ENCODE measurements at regions of chr22 and their contacts with region 1.

Region 1: GRCh38 chr22:30005213-30005857 is 74.9 kb upstream of the HORMAD2 start:
- DNase-seq: peak; percentile 23 to 90
- H3K4me3 ChIP-seq: no peak overlapping the region
- H3K27ac ChIP-seq: no peak overlapping the region
- H3K4me1 ChIP-seq: peaks cover 0 to 2% (median 0%) of the 10 kb centered on the region in 4 experiments; a peak in 3 of 7 replicates
- H3K27me3 ChIP-seq: no peaks in the 10 kb centered on the region
- CTCF ChIP-seq: peak; percentile 77 to 97 (median 84)
- EP300 ChIP-seq: no peak
- POLR2A ChIP-seq: no peak
- RAD21 ChIP-seq: peak; percentile 95

Region 2: DNA sequence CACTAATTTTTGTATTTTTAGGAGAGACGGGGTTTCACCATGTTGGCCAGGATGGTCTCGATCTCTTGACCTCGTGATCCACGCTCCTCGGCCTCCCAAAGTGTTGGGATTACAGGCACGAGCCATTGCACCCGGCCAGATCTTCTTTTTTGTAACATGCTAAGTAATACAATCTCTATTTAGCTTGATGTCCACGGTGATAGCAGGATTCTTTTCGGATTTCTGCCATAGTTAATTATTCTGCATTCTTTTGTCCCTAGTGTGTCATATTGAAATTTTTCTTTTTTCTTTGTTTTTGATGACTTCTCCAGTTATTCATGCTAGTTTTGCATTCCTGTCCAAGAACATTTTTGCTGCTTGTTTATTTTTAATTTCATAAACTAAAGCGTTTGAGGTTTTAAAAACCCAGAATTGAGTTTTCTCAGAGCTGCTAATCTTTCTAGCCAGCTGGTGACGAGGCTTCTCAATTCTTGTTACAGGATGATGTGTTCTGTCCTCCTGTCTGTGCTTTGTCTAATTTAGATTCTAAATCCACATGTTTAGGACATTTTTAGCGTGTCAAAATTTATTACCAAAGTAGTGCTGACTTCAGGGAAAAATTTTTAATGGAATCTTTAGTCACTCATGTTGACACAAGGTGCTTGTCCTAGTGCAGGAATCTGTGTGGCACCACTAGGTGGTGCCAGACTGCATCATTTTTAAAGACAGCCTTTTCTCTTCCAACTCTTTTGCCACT is 380.1 kb before region 1 on chr22:
- CTCF ChIA-PET with region 1: interaction called, 11 read pairs
- POLR2A ChIA-PET with region 1: no interaction called
- DNase-seq: no peak
- H3K4me3 ChIP-seq: no peak overlapping the region
- H3K27ac ChIP-seq: no peak overlapping the region
- H3K4me1 ChIP-seq: peaks cover 0 to 6% (median 3%) of the 10 kb centered on the region in 4 experiments; a peak in 3 of 7 replicates
- H3K27me3 ChIP-seq: no peaks in the 10 kb centered on the region
- CTCF ChIP-seq: peak in 2 of 3 experiments; percentile 79 to 81; a peak in 3 of 4 replicates
- EP300 ChIP-seq: no peak
- POLR2A ChIP-seq: no peak
- RAD21 ChIP-seq: peak; percentile 41 to 64

Region 3: GRCh38 chr22:29716814-29717545 is 288.4 kb before region 1 on chr22:
- CTCF ChIA-PET with region 1: interaction called, 13 read pairs
- POLR2A ChIA-PET with region 1: no interaction called
- DNase-seq: peak in 1 of 2 experiments; percentile 86
- H3K4me3 ChIP-seq: no peak overlapping the region
- H3K27ac ChIP-seq: no peak overlapping the region
- H3K4me1 ChIP-seq: peaks cover 0 to 14% (median 4%) of the 10 kb centered on the region in 4 experiments; a peak in 6 of 7 replicates
- H3K27me3 ChIP-seq: peaks cover 21 to 36% (median 32%) of the 10 kb centered on the region in 4 experiments
- CTCF ChIP-seq: no peak
- EP300 ChIP-seq: no peak
- POLR2A ChIP-seq: no peak
- RAD21 ChIP-seq: peak; percentile 6 to 37; a peak in 1 of 4 replicates

Region 4: DNA sequence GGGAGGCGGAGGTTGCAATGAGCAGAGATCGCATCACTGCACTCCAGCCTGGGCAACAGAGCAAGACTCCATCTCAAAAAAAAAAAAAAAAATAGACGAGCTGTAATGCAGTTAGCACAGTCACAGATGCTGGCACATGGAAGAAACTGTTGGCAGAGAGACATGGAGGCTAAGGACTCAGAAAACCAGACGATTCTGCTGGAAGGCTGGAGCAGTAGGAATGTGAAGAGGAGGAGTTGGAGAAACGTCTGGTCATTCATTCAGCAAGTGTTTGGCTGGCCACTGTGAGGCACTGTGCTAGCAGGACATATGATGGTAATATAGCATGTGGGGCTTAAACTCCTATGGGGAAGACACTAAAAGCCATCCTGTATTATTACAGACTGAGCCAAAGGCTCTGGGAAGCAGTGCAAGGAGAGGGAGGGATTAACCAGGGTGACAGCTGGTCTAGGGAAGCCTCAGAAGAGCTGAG is 233.1 kb before region 1 on chr22:
- CTCF ChIA-PET with region 1: interaction called, 11 read pairs
- POLR2A ChIA-PET with region 1: no interaction called
- DNase-seq: no peak
- H3K4me3 ChIP-seq: no peak overlapping the region
- H3K27ac ChIP-seq: no peak overlapping the region
- H3K4me1 ChIP-seq: peaks cover 0 to 5% (median 3%) of the 10 kb centered on the region in 4 experiments; a peak in 5 of 7 replicates
- H3K27me3 ChIP-seq: no peaks in the 10 kb centered on the region
- CTCF ChIP-seq: peak; percentile 36 to 71 (median 37); a peak in 3 of 4 replicates
- EP300 ChIP-seq: no peak
- POLR2A ChIP-seq: no peak
- RAD21 ChIP-seq: peak; percentile 54 to 57

Region 5: GRCh38 chr22:29816128-29816527 is 189.2 kb before region 1 on chr22:
- CTCF ChIA-PET with region 1: interaction called, 14 read pairs
- POLR2A ChIA-PET with region 1: interaction called, 3 read pairs
- DNase-seq: no peak
- H3K4me3 ChIP-seq: no peak overlapping the region
- H3K27ac ChIP-seq: no peak overlapping the region
- H3K4me1 ChIP-seq: no peaks in the 10 kb centered on the region
- H3K27me3 ChIP-seq: no peaks in the 10 kb centered on the region
- CTCF ChIP-seq: no peak
- EP300 ChIP-seq: no peak
- POLR2A ChIP-seq: no peak
- RAD21 ChIP-seq: no peak

Region 6: DNA sequence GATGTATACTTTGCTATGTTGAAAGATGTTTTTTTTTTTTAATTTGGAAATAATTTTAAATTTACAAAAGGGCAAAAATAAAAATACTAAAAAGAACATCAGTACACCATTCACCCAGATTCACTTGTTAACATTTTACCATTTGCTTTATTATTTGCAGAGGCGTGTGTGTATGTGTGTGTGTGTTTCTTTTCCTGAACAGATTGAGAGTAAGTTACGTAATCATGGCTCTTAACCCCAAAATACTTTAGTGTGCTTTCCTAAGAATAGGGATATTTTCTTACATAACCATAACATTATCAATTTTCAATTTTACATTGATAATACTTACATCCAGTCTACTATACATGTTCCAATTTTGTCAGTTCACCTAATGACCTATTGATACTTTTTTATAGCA is 16.6 kb before region 1 on chr22:
- CTCF ChIA-PET with region 1: interaction called, 11 read pairs
- POLR2A ChIA-PET with region 1: interaction called, 3 read pairs
- DNase-seq: no peak
- H3K4me3 ChIP-seq: no peak overlapping the region
- H3K27ac ChIP-seq: no peak overlapping the region
- H3K4me1 ChIP-seq: peaks cover 0 to 7% (median 4%) of the 10 kb centered on the region in 4 experiments; a peak in 3 of 7 replicates
- H3K27me3 ChIP-seq: no peaks in the 10 kb centered on the region
- CTCF ChIP-seq: no peak
- EP300 ChIP-seq: no peak
- POLR2A ChIP-seq: no peak
- RAD21 ChIP-seq: no peak

Region 7: GRCh38 chr22:30015846-30016245 is 10.5 kb after region 1 on chr22:
- CTCF ChIA-PET with region 1: interaction called, 13 read pairs
- POLR2A ChIA-PET with region 1: no interaction called
- DNase-seq: no peak
- H3K4me3 ChIP-seq: no peak overlapping the region
- H3K27ac ChIP-seq: no peak overlapping the region
- H3K4me1 ChIP-seq: no peaks in the 10 kb centered on the region
- H3K27me3 ChIP-seq: no peaks in the 10 kb centered on the region
- CTCF ChIP-seq: no peak
- EP300 ChIP-seq: no peak
- POLR2A ChIP-seq: no peak
- RAD21 ChIP-seq: no peak

Measured in H1 (cell line).